PC-9 (cell line): ENCODE measurements at regions of chr6 and their contacts with region 1.

Region 1: DNA sequence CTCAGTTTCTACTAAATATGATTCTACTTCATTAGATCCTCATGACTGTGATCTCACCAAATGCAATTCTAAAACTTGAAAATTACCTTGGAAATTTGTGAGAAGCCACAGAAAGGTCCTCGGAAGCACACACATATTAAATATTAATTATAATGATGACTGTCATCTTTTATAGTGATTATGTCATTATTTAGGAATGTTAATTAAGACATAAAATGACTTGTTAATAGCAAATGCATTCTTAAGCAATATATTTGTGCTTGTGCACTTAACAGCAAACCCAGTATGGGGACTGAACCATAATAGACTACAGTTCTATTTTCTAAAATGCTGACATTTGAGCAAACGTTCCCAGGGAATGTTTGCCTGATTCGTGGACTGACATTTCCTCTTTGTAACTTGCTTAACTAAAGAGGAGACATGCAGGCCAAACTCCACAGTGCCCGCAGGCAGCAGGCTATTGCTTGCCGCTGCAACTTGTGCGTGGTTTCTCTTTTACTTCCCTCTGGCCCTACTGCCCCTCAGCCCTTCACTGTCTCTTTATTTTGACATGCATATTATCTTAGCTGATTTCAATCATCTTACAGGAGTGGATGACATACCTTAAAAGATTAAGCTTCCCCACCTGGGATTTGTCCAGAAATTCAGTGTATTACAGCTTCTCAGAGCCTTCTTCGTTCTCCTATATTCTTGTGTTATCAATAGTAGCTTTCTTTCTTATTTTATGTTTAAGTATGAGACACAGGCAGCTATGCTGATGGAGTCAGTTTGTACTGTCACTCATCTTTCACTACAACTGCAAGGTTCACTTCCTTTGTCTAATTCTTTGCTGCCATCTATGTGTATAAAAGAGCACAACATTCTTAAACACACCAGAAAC is 141.5 kb downstream of the GMDS start:
- DNase-seq: peak; percentile 3 to 37
- H3K4me3 ChIP-seq: no peak overlapping the region
- H3K27ac ChIP-seq: no peak overlapping the region
- H3K4me1 ChIP-seq: no peaks in the 10 kb centered on the region
- H3K27me3 ChIP-seq: no peaks in the 10 kb centered on the region
- CTCF ChIP-seq: peak; percentile 67

Region 2: DNA sequence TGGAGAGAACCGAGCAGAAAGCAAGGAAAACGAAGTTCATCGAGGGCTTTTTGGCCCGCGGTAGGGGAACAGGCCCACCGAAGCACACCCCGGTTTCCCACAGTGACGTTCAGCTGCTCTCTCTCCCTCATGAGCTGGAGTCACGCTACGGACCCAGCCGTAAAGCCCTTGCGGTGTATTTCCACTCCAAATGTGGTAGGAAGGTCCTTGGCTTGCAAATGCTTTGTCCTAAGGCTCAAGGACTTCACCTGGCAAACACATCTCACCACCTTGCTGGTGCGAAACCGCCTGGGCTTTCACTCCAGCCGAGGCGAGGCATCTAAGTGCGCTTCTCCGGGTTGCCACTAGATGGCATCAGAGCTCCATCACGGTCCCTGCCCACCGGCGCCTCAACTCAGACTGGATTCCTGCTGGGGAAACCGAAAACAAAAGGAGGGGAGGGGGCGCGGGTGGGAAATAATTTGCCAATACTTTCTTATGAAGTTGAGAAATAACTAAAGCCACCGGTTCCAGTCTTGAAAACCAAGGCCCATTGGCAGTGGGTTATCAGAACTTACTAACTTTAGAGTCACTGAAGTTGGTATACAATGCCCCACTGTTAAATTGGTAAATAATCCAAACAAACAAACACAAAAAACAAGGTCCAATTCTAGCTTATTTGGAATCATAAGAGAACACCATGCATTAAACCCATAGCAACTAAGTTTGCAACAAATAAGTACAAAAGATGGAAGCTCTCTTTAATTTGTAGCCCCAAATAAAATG is 507.6 kb before region 1 on chr6:
- CTCF ChIA-PET with region 1: no interaction called
- POLR2A ChIA-PET with region 1: no interaction called
- intact Hi-C with region 1: loop called (anchors 2 kb)
- DNase-seq: peak; percentile 43 to 61
- H3K4me3 ChIP-seq: no peak overlapping the region
- H3K27ac ChIP-seq: no peak overlapping the region
- H3K4me1 ChIP-seq: no peaks in the 10 kb centered on the region
- H3K27me3 ChIP-seq: no peaks in the 10 kb centered on the region
- CTCF ChIP-seq: peak; percentile 88

Region 3: DNA sequence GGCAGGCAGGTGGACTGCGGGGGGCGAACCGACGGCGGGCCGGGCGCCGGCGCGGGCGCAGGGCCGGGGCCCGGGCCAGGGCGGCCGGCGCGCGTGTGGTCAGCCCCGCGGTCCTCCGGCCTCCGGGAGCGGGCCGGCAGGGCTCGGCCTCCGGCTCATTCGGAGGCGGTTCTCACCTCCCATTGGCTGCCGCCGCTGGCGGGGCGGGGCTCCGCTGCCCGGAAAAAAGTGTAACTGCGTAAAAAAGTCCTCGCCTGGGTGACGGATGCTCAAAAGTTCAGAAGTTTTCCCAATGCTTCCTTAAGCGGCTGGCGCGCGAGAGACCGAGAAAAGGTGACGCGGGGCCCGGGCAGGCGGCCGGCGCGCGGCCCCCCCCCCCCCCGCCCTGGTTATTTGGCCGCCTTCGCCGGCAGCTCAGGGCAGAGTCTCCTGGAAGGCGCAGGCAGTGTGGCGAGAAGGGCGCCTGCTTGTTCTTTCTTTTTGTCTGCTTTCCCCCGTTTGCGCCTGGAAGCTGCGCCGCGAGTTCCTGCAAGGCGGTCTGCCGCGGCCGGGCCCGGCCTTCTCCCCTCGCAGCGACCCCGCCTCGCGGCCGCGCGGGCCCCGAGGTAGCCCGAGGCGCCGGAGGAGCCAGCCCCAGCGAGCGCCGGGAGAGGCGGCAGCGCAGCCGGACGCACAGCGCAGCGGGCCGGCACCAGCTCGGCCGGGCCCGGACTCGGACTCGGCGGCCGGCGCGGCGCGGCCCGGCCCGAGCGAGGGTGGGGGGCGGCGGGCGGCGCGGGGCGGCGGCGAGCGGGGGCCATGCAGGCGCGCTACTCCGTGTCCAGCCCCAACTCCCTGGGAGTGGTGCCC is 494.0 kb before region 1 on chr6 and contains the start of gene FOXC1:
- CTCF ChIA-PET with region 1: no interaction called
- POLR2A ChIA-PET with region 1: interaction called, 22 read pairs
- intact Hi-C with region 1: no loop called
- DNase-seq: peak; percentile 81 to 96
- H3K4me3 ChIP-seq: peak within 1 kb of the TSS; percentile 89
- H3K27ac ChIP-seq: peak within 1 kb of the TSS; percentile 54
- H3K4me1 ChIP-seq: no peaks in the 10 kb centered on the region; the same call in 1 of the 2 replicates
- H3K27me3 ChIP-seq: no peaks in the 10 kb centered on the region
- CTCF ChIP-seq: no peak
- total RNA-seq, gene FOXC1: 16.2 and 18.6 TPM in 2 replicates

Region 4: DNA sequence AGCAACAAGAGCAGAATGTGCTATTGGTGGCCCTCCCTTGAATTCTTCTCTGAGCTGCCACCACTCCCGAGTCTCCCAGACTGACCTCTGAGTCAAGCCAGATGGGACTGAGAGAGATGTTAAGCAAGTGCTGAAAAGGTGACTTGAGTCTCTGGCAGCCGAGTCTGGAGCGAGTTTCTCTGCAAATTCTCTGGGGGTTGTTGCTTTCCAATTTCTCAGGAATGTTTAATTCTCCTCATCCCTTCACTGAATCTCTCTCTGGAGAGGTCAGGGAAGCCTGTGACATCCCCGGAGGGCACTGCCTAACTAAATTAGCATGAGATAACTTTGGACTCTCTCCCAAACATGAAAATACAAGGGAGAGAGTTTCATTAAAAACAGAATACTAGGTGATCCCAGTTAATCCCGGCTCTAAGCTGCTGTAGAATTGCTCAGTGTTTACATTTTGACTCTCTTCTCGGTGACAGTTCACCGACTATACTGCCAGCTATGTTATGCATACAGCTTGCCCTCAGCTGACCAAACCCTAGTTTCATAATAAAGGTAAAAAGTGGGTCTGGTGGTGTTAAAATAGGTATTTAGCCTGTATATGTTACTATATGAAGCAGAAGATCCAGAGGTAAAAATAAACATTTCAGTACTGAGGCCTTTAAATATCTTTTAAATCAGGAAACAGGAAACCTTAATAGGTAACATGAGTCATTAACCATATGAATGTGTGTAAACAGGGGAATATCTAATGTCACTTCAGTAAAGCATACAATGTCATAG is 336.2 kb before region 1 on chr6:
- CTCF ChIA-PET with region 1: no interaction called
- POLR2A ChIA-PET with region 1: no interaction called
- intact Hi-C with region 1: loop called (anchors 10 kb)
- DNase-seq: peak; percentile 47 to 81
- H3K4me3 ChIP-seq: peak overlapping the region; percentile 43
- H3K27ac ChIP-seq: peak overlapping the region; percentile 94
- H3K4me1 ChIP-seq: peaks cover 50% of the 10 kb centered on the region
- H3K27me3 ChIP-seq: no peaks in the 10 kb centered on the region
- CTCF ChIP-seq: no peak

Region 5: DNA sequence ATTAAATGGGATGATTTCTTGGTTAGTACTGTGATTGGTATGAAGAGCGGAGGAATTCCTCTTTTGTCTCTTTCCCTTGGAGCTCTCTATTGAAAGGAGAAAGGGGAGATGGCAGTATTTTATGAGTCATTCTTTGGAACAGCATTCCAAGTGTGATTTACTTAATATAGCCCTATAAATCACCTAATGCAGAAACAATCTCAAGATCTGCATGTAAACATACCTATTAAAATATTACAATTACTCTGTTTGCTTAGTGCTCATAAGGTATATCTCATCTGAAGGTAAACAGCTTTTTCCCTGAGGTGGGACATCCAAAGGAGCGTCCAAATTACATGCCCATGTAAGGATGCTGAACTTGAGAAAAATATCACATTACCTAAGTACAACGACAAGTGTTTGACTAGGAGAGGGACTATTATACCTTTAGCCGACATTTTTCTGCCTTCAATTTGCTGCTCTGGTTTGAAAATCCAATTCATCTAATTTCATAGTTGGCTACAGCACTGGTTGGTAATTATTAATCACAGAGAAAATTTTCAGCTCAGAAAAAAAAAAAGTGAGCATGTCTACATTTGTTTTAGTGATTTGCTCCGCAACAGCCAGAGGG is 265.2 kb before region 1 on chr6:
- CTCF ChIA-PET with region 1: no interaction called
- POLR2A ChIA-PET with region 1: no interaction called
- intact Hi-C with region 1: loop called (anchors 5 kb)
- DNase-seq: peak in 1 of 2 experiments; percentile 84
- H3K4me3 ChIP-seq: no peak overlapping the region
- H3K27ac ChIP-seq: 0 out of 2 replicates have a peak overlapping the region, but pooled peaks have one; percentile 24
- H3K4me1 ChIP-seq: peaks cover 17% of the 10 kb centered on the region
- H3K27me3 ChIP-seq: no peaks in the 10 kb centered on the region
- CTCF ChIP-seq: no peak

Region 6: DNA sequence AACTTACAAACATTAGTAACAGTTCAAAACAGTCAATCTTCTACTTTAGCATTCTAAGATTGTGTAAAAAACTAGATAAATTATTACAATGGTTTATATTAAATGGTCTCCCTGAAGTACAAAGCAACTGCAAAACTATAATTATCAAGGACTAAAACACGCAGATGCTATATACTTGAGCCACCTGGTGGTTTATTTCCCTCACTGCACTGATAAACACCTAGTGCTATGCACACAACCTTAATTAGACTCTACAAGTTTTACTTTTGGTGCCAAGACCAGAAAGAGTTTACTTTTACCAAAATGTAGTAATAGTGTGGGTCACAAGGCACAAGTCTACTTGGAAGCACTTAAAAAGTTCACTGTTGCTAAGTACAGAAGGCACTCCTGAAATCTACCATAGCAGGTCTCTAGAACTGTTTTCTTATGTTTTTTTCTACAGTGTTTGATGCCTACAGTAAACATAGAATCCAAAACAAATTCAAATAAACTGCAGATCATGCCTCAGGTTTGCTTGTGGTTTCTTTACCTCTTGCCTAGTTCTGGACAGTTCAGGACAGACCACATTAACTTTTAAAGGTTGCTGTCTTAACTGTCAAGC is 92.3 kb after region 1 on chr6:
- CTCF ChIA-PET with region 1: no interaction called
- POLR2A ChIA-PET with region 1: no interaction called
- intact Hi-C with region 1: loop called (anchors 2 kb)
- DNase-seq: peak in 1 of 2 experiments; percentile 17
- H3K4me3 ChIP-seq: no peak overlapping the region
- H3K27ac ChIP-seq: no peak overlapping the region
- H3K4me1 ChIP-seq: peaks cover 9% of the 10 kb centered on the region; the same call in 1 of the 2 replicates
- H3K27me3 ChIP-seq: no peaks in the 10 kb centered on the region
- CTCF ChIP-seq: peak; percentile 73

Region 7: GRCh38 chr6:2448820-2449571 is 345.1 kb after region 1 on chr6:
- CTCF ChIA-PET with region 1: no interaction called
- POLR2A ChIA-PET with region 1: no interaction called
- intact Hi-C with region 1: loop called (anchors 5 kb)
- DNase-seq: peak; percentile 28 to 59
- H3K4me3 ChIP-seq: no peak overlapping the region
- H3K27ac ChIP-seq: no peak overlapping the region
- H3K4me1 ChIP-seq: no peaks in the 10 kb centered on the region
- H3K27me3 ChIP-seq: no peaks in the 10 kb centered on the region
- CTCF ChIP-seq: peak; percentile 78